Mammary epithelial cell (primary cell): ENCODE measurements at regions of chrX and their contacts with region 1.

Region 1: DNA sequence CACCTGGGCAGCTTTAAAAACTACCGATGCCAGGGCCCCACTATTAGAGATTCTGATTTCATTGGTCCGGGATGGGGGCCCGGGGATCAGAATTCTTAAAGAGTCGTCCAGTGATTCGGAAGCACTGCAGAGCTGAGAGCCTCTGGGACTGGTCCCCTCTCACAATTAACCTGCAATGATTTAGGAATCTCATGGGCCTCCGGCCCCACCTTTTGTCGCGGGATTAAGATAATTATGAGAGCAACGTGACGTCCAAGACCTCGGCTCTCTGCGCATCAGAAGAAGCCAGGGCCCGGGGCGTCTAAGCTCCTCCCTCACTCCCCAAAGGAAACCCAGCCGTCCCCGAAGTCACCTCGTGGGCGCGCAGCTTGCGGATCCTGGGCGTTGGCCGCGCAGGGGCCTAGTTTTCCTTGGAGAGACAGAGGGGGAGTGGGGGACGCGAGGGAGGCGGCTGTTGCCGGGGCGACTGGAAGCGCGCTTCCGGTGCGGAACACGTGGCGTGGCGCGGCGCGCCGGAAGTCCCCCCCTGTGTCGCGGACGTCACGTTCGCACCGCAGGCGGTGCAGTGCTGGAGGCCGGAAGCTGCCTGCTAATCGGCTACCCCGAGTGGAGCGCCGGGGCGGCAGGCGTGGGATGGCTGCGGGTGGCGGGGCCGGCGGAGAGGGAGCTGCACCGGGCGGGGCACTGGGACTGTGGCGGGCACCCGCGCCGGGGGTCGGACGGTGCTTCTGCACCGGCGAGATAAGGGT is at the start of gene GEMIN8:
- DNase-seq: peak; percentile 93
- H3K4me3 ChIP-seq: peak within 1 kb of the TSS; percentile 55 to 85 (median 58)
- H3K27ac ChIP-seq: peak within 1 kb of the TSS; percentile 87
- H3K4me1 ChIP-seq: peaks cover 49% of the 10 kb centered on the region
- H3K27me3 ChIP-seq: no peaks in the 10 kb centered on the region
- CTCF ChIP-seq: no peak
- total RNA-seq, gene GEMIN8: 14.7 to 25.9 TPM

Region 2: GRCh38 chrX:13515211-13515930 is 514.2 kb before region 1 on chrX:
- CTCF ChIA-PET with region 1: no interaction called
- dilution Hi-C with region 1: no loop called
- in situ Hi-C with region 1: loop called in 1 of 2 experiments (anchors 10 kb)
- intact Hi-C with region 1: no loop called
- DNase-seq: no peak
- H3K4me3 ChIP-seq: no peak overlapping the region
- H3K27ac ChIP-seq: no peak overlapping the region
- H3K4me1 ChIP-seq: no peaks in the 10 kb centered on the region
- H3K27me3 ChIP-seq: no peaks in the 10 kb centered on the region
- CTCF ChIP-seq: no peak

Region 3: DNA sequence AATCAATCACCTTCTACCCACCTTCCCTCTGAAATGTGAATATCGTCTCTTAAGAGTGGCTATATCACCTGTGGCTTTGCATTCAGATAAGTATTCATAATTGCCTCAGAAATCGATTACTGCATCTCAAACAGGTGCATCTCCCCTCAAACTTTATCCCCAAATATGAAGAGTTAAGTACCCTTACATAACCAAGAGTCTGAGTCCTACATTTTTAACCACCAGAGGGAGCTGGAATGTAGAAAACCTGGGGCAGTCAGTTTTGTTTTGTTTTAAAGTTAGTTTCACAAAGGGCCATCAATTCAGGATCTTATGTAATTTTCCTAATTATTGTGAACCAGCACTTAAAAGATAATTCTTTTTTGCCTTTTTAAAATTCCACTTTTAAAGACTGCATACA is 371.0 kb before region 1 on chrX:
- CTCF ChIA-PET with region 1: interaction called, 3 read pairs
- dilution Hi-C with region 1: no loop called
- in situ Hi-C with region 1: loop called (anchors 5 kb)
- intact Hi-C with region 1: loop called (anchors 1 kb)
- DNase-seq: peak; percentile 51
- H3K4me3 ChIP-seq: no peak overlapping the region
- H3K27ac ChIP-seq: peak overlapping the region; percentile 76
- H3K4me1 ChIP-seq: peaks cover 16% of the 10 kb centered on the region
- H3K27me3 ChIP-seq: no peaks in the 10 kb centered on the region
- CTCF ChIP-seq: peak; percentile 74 to 75

Region 4: DNA sequence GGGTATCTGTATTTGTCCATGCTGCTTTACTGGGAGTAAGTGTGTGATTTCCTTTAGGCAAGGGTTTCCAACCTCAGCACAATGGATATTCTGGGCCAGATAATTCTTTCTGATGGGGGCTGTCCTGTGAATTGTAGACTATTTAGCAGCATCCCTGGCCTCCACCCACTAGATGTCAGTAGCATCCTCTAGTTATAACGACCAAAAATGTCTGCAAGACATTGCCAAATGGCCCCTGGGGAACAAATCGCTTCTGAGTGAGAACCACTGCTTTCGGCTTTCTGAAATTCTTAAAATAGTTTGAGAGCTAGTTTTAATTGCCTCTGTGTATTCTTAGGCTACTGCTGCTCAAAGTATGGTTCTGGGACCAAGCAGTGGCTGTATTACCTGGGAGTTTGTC is 131.5 kb before region 1 on chrX:
- CTCF ChIA-PET with region 1: no interaction called
- dilution Hi-C with region 1: no loop called
- in situ Hi-C with region 1: no loop called
- intact Hi-C with region 1: loop called (anchors 1 kb)
- DNase-seq: peak; percentile 41
- H3K4me3 ChIP-seq: no peak overlapping the region
- H3K27ac ChIP-seq: peak overlapping the region; percentile 94
- H3K4me1 ChIP-seq: peaks cover 38% of the 10 kb centered on the region
- H3K27me3 ChIP-seq: no peaks in the 10 kb centered on the region
- CTCF ChIP-seq: peak; percentile 52 to 62

Region 5: DNA sequence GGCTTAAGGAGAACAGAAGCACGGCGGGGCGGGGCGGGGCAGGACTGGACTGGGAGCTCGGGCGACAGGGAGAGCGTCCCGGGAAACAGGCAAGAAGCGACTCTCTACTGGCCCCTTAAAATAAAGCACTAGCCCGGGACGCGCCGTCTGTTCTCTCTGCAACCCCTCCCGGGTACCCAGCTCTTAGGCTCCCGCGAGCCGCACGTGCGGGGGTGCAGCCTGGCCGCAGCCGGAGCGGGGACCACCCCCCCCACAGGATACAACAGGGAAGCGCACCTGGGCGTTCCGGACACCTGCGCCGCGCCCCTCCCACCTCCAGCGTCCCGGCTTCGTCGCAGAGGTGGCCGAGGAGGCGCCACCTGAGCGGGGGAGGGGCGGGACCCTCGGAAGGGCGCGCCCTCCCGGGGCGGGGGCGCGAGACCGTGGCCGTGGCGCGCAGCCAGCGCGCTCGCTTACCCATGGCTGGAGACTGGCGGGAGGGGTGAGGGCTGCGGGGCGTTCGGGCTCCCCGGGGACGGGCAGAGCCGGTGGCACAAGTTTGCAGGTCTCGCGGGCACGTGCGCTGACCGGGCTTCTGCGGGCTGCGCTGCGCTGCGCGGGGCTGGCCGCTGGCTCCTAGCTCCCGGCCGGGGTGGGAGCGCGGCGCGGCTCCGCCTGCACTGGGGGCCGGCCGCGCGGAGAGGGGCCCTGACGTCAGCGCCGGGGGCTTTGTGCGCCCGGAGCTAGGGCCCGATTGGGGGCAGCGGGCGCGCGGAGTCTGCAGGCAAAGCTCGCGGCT is 91.4 kb before region 1 on chrX:
- CTCF ChIA-PET with region 1: no interaction called
- dilution Hi-C with region 1: no loop called
- in situ Hi-C with region 1: no loop called
- intact Hi-C with region 1: loop called (anchors 1 kb)
- DNase-seq: no peak
- H3K4me3 ChIP-seq: peak overlapping the region; percentile 63 to 66 (median 65)
- H3K27ac ChIP-seq: no peak overlapping the region
- H3K4me1 ChIP-seq: peaks cover 30% of the 10 kb centered on the region
- H3K27me3 ChIP-seq: no peaks in the 10 kb centered on the region
- CTCF ChIP-seq: no peak

Region 6: DNA sequence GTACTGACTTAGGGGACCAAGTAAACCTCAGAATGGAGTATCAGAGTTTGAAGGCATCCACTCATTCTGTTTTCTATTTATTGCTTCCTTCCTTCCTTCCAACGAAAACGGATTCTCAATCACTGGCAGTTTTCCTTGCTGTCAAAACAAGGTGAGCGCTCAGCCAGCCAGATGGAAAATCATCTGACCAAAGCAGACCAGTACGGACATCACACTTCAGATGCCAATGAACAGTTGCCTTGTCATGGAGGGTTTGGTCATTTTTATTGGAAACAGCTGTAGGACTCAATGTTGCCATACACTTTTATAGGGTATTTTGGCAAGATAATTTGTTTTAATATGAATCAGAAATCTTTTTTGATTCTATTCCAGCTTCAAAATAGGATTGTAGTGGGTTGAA is 16.5 kb before region 1 on chrX:
- CTCF ChIA-PET with region 1: no interaction called
- dilution Hi-C with region 1: no loop called
- in situ Hi-C with region 1: no loop called
- intact Hi-C with region 1: loop called (anchors 1 kb)
- DNase-seq: no peak
- H3K4me3 ChIP-seq: no peak overlapping the region
- H3K27ac ChIP-seq: no peak overlapping the region
- H3K4me1 ChIP-seq: peaks cover 19% of the 10 kb centered on the region
- H3K27me3 ChIP-seq: no peaks in the 10 kb centered on the region
- CTCF ChIP-seq: no peak

Region 7: GRCh38 chrX:15674841-15675489 is 1645.4 kb after region 1 on chrX:
- CTCF ChIA-PET with region 1: no interaction called
- dilution Hi-C with region 1: no loop called
- in situ Hi-C with region 1: no loop called
- intact Hi-C with region 1: loop called (anchors 5 kb)
- DNase-seq: peak; percentile 97
- H3K4me3 ChIP-seq: peak overlapping the region; percentile 59 to 90 (median 82)
- H3K27ac ChIP-seq: peak overlapping the region; percentile 97
- H3K4me1 ChIP-seq: peaks cover 20% of the 10 kb centered on the region
- H3K27me3 ChIP-seq: no peaks in the 10 kb centered on the region
- CTCF ChIP-seq: no peak